AG04449 (cell line): ENCODE measurements at regions of chr1 and their contacts with region 1.

Region 1: GRCh38 chr1:23098463-23099170 is 70.0 kb downstream of the LUZP1 start:
- DNase-seq: no peak
- H3K4me3 ChIP-seq: no peak overlapping the region
- CTCF ChIP-seq: peak; percentile 83

Region 2: DNA sequence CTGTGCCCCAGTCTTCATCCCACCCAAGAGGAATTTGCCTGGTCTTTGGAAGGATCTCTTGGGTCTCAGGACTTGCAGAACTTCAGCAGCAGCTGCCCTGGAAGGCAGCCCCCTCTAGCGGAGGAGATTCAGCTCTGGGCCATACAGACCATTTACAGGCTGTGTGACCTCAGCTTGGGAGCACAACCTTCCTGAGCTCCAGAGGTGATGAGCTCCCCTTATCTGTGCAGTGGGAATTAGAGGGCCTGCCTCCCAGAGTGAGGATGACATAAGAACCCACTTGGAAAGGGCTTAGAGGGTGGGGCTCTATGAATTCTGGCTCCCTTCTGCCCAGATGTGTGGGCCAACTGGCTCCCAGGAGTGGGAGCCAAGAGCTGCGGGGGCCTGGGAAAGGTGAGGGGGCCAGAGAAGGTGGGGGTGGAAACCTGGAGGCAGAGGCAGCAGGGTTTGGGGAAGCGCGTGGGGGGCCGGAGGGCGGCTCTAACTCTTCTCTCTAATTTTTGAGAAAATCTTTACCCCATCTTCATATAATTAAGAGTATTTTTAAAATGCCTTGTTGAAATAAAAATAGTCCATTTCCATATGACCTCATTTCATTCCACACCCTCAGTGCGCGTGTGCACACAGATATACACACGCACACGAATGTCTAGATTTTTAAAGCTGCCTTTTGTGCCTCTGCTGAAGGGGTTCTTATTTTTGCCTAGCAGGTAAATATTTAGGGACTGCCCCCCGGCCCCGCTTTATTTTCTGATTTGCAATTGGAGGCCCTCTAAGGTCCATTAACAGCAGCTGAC is 366.5 kb before region 1 on chr1:
- CTCF ChIA-PET with region 1: no interaction called
- POLR2A ChIA-PET with region 1: no interaction called
- DNase-seq: no peak
- H3K4me3 ChIP-seq: no peak overlapping the region
- CTCF ChIP-seq: peak; percentile 36

Region 3: GRCh38 chr1:23081376-23081775 is 17.2 kb before region 1 on chr1:
- CTCF ChIA-PET with region 1: interaction called, 50 read pairs
- POLR2A ChIA-PET with region 1: no interaction called
- DNase-seq: no peak
- H3K4me3 ChIP-seq: no peak overlapping the region
- CTCF ChIP-seq: no peak

Region 4: GRCh38 chr1:23122023-23122748 is 23.6 kb after region 1 on chr1:
- CTCF ChIA-PET with region 1: interaction called, 109 read pairs
- POLR2A ChIA-PET with region 1: no interaction called
- DNase-seq: no peak
- H3K4me3 ChIP-seq: no peak overlapping the region
- CTCF ChIP-seq: no peak

Region 5: DNA sequence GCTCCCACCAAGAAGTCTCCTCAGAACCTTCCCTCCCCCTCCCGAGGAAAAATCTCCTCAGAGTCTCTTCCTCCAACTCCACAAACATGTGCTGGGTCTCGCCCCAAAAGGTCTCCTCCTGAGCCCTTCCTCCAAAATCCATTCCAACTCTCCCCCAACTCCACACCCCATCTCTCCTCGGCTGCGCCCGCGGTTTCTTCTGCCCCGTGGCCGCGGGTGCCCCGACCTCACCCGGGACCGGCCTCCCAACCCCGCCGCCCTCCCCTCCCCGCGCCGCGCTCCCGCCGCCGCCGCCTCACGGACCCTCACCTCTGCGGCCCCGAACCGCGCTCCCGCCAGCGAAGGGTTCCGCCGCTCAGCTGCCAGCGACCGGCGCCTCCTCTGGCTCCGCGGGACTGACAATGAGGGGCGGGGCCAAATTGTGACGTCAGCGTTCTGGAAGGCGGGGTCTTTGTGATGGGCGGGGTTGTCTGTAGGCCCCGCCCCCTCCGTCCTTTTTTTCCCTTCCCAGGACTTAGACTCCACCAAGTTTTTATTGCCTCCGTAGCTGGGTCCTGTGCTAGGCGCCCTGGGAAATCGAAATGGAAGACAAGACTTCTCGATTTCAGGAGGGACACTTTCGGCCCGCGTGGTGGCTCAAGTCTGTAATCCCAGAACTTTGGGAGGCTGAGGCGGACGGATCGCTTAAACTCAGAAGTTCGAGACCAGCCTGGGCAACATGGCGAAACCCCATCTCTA is 70.0 kb after region 1 on chr1 and contains the start of gene LUZP1:
- CTCF ChIA-PET with region 1: interaction called, 174 read pairs
- POLR2A ChIA-PET with region 1: interaction called, 4 read pairs
- DNase-seq: no peak
- H3K4me3 ChIP-seq: peak within 1 kb of the TSS; percentile 85
- CTCF ChIP-seq: peak; percentile 7

Region 6: DNA sequence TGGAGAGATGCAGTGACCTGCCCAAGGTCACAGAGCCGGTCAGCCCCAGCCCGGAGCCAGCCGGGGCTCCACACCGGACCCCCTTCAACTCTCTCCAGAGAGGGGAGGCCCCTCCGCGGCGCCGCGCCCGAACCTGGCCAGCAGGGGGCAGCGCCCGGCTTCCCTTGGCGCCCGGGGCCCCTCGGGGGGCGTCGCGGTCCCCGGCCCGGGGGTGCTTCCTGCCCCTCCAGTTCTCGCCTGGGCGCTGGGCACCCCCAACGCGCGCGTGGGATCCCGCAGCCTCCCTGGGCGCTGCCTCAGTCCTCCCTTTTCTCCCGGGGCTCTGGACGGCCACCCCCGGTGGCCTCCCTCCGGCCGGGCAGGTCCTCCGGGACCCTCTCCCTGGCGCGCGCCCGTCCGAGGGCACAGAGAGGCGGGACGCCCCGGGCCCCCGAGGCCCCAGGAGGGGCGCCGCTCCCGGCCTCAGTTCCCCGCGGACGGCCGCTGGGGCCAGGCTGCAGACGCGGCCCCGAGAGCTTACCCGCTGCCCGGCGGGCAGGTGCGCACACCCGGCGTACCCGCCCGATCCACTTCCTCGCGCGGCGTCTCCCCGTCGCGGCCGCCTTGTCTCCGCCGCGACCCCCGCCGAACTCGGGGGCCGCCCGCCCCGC is 118.3 kb after region 1 on chr1:
- CTCF ChIA-PET with region 1: interaction called, 10 read pairs
- POLR2A ChIA-PET with region 1: no interaction called
- DNase-seq: no peak
- H3K4me3 ChIP-seq: peak overlapping the region; percentile 40
- CTCF ChIP-seq: peak; percentile 65

Region 7: GRCh38 chr1:23362218-23362713 is 263.6 kb after region 1 on chr1:
- CTCF ChIA-PET with region 1: no interaction called
- POLR2A ChIA-PET with region 1: no interaction called
- DNase-seq: no peak
- H3K4me3 ChIP-seq: no peak overlapping the region
- CTCF ChIP-seq: no peak